Esophagus muscularis mucosa (tissue), 4 donors: ENCODE measurements at regions of chr17 and their contacts with region 1.

Region 1: DNA sequence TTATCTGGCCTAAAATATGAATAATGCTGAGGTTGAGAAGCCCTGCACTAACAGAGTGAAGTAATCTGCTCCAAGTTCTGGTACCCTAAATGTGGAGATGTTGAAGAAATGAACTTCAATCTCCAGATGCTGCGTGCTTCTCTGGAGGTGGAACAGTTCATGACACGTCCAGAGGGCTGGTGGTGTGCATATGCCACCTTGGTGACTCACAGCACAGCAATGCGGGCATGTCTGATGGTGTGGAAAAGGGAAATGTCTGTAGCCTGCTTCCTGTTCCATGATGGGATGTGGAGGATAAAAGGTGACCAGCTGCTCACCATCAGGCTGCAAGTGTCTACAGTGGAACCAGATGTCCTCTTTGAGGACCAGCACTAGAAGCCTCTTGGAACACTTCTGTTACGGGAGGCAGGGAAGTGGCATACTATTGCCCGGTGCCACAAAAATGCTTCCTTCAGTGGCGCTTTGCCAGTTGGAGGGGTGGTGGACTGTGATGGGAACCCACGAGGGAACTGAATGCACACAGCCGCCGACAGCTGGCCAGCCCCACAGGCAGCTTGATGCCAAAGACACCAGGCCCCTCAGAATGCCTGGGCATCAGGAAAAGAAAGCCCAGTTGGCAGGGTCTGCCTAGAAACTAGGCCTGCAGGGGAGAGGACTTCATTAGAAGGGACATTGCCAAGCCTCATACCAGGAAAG is 19.9 kb downstream of the SNX11 start:
- DNase-seq: no peak
- H3K4me3 ChIP-seq: no peak overlapping the region
- H3K27ac ChIP-seq: no peak overlapping the region
- H3K4me1 ChIP-seq: peaks cover 0 to 5% (median 3%) of the 10 kb centered on the region in 4 donors
- H3K27me3 ChIP-seq: peaks cover 0 to 4% (median 0%) of the 10 kb centered on the region in 4 donors
- CTCF ChIP-seq: no peak
- EP300 ChIP-seq: no peak
- POLR2A ChIP-seq: no peak

Region 2: DNA sequence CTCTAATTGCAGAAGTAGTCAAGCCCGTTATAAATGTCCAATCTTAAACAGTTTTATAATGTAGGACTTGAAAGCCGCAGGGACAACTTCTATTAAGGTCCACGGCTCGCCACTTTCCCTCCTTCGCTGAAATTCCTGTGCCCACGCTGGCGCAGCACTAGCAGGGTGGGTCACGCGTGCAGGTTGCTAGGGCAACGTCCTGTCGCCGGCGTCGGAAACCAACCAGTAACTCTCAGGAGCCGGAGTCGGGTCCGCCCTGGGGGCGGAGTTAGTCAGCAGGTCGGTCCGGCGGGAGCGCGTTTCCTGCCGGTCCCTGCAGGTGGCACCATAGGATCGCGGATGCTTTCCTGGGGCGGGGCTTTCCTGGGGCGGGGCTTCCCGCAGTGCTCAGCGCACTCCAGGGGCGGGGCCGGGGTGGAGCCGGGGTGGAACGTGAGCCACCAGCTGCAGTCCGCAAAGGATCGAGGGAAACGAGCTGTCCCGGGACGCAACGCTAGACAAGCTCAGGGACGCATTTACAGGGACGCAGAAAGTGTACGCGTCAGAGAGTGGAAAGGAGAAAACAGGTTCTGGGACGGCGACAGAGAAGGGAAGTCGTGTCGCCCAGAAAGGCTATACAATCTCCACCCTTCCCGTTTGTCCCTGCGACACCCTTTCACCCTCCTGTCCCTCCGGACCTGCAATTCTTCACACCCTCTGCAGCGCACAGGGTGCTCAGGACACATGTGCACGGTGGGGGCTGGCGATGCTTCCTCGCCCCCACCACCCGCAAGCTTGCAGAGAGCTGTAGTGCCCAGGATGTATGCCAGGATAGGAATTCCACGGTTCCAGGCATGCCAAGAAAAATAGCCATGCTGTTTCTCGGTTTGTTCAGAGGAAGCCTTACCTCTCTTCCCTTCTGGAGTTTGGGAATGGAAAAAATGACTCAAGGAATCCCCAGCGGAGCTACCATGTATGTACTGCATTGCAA is 102.3 kb before region 1 on chr17:
- intact Hi-C with region 1: loop called (anchors 2 kb)
- DNase-seq: peak; percentile 100
- H3K4me3 ChIP-seq: peak overlapping the region; percentile 52 to 64 (median 56)
- H3K27ac ChIP-seq: peak overlapping the region; percentile 81 to 92 (median 86)
- H3K4me1 ChIP-seq: peaks cover 36 to 42% (median 41%) of the 10 kb centered on the region in 4 donors
- H3K27me3 ChIP-seq: peaks cover 0 to 28% (median 2%) of the 10 kb centered on the region in 4 donors
- CTCF ChIP-seq: peak; percentile 93 to 94 (median 94)
- EP300 ChIP-seq: no peak
- POLR2A ChIP-seq: no peak

Region 3: DNA sequence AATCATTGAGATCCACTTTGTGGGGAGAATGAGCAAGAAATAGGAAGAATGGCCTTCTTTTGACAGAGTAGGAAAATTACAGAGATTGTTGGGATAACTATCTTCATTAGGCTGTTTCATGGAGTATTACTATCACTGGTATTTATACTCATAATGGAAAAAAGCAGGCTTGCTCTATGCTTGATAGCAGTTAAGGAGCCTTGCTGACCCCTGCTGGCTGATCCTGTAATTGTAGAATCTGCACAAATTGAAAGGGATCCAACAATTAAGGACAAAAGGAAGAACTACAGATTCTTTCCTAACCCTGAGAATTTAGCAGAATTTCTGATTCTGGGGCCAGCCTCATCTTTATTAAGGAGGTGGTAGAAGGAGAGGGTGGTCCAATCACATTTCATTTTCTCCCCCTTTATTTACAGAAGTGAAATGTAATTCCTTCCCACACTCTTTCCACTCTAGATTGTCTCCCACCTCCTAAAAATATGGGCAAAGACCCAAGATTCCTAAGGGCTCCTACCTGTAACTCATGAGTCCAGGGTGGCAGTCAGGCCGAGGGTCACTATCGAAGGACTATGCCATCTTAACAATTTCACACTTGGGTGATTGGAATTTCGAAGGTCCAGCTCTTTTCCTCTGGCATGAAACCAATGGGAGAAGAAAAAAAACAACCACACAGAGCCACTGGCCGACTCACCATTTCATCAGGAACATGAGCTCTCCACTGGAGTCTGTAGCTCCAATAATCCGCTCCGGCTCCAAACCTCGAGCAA is 53.0 kb before region 1 on chr17:
- intact Hi-C with region 1: loop called (anchors 5 kb)
- DNase-seq: peak; percentile 95
- H3K4me3 ChIP-seq: no peak overlapping the region
- H3K27ac ChIP-seq: peak overlapping the region in 3 of 4 donors; percentile 7 to 34 (median 31)
- H3K4me1 ChIP-seq: peaks cover 5 to 9% (median 7%) of the 10 kb centered on the region in 4 donors
- H3K27me3 ChIP-seq: no peaks in the 10 kb centered on the region
- CTCF ChIP-seq: peak; percentile 83 to 94 (median 86)
- EP300 ChIP-seq: no peak
- POLR2A ChIP-seq: no peak

Region 4: GRCh38 chr17:48198950-48199541 is 71.5 kb after region 1 on chr17:
- intact Hi-C with region 1: no loop called
- DNase-seq: no peak
- H3K4me3 ChIP-seq: no peak overlapping the region
- H3K27ac ChIP-seq: no peak overlapping the region
- H3K4me1 ChIP-seq: no peaks in the 10 kb centered on the region
- H3K27me3 ChIP-seq: peaks cover 0 to 24% (median 3%) of the 10 kb centered on the region in 4 donors
- CTCF ChIP-seq: no peak
- EP300 ChIP-seq: no peak
- POLR2A ChIP-seq: no peak